ENCODE measurements at regions of chr3 and their contacts with region 1.

Region 1: GRCh38 chr3:182837855-182838454 is 44.7 kb downstream of the ATP11B start:
- DNase-seq: no peak
- ATAC-seq: no peak

Region 2: GRCh38 chr3:182713743-182714517 is 124.0 kb before region 1 on chr3:
- intact Hi-C with region 1: loop called (anchors 5 kb)
- DNase-seq: no peak
- ATAC-seq: peak; percentile 86